Left ventricle myocardium inferior (tissue), 1 donor: ENCODE measurements at regions of chr13 and their contacts with region 1.

Region 1: DNA sequence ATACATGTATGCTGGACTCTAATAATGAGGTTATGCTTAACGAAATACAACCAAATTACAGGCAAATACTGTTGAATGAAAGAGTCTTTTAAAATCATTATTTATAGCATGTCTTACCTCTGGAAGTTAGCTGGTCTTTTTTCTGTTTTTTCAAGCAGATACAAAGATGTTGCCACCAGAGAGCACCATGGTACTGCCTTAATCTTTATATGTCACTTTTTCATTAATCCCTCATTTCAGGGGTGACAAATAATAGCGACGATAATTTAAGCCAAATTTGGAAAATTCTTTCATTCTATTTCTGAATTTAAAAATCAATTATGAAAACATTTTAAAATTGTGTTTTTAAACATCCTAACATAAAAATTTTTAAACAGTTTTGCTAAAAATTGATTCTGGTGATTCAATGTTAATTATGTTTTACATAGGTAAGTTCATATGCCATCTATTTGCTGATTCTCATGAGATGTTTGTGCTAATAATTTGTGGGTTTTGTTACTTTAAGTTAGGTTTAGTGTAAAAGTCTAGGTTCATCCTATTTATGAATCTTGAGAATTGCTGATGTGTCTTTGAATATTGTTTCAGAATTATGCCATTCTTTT is 379.3 kb upstream of the SGCG start:
- DNase-seq: no peak
- H3K4me3 ChIP-seq: no peak overlapping the region
- H3K27ac ChIP-seq: no peak overlapping the region
- H3K4me1 ChIP-seq: no peaks in the 10 kb centered on the region
- H3K27me3 ChIP-seq: peaks cover 5% of the 10 kb centered on the region
- CTCF ChIP-seq: peak; percentile 48

Region 2: DNA sequence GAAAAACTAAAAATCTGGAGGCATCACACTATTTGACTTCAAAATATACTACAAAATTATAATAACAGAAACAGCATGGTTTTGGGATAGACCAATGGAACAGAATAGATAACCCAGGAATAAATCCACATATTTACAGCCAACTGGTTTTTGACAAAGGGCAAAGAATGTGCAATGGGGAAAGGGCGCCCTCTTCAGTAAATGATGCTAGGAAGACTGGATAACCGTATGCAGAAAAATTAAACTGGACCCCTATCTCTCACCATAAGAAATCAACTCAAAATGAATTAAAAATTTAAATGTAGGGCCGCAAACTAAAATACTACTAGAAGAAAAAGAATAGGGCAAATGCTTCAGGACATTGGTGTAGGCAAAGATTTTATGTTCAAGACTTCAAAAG is 61.2 kb before region 1 on chr13:
- intact Hi-C with region 1: no loop called
- DNase-seq: no peak
- H3K4me3 ChIP-seq: no peak overlapping the region
- H3K27ac ChIP-seq: no peak overlapping the region
- H3K4me1 ChIP-seq: no peaks in the 10 kb centered on the region
- H3K27me3 ChIP-seq: peaks cover 7% of the 10 kb centered on the region
- CTCF ChIP-seq: peak; percentile 14

Region 3: DNA sequence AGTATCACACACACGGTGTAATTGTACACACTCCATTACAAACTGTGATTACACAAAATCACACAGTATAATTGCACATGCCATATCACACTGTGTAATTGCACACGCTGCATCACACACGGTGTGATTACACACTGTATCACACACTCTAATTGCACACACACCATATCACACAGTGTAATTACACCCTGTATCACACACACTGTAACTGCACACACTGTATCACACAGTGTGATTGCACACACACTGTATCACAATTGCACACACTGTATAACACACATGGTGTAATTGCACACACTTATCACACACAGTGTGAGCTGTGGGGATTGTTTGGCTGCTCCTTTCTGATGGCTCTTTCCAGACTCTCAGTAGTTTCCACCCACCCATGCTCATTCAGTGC is 216.6 kb after region 1 on chr13:
- intact Hi-C with region 1: loop called (anchors 5 kb)
- DNase-seq: no peak
- H3K4me3 ChIP-seq: no peak overlapping the region
- H3K27ac ChIP-seq: no peak overlapping the region
- H3K4me1 ChIP-seq: no peaks in the 10 kb centered on the region
- H3K27me3 ChIP-seq: peaks cover 7% of the 10 kb centered on the region
- CTCF ChIP-seq: no peak

Region 4: DNA sequence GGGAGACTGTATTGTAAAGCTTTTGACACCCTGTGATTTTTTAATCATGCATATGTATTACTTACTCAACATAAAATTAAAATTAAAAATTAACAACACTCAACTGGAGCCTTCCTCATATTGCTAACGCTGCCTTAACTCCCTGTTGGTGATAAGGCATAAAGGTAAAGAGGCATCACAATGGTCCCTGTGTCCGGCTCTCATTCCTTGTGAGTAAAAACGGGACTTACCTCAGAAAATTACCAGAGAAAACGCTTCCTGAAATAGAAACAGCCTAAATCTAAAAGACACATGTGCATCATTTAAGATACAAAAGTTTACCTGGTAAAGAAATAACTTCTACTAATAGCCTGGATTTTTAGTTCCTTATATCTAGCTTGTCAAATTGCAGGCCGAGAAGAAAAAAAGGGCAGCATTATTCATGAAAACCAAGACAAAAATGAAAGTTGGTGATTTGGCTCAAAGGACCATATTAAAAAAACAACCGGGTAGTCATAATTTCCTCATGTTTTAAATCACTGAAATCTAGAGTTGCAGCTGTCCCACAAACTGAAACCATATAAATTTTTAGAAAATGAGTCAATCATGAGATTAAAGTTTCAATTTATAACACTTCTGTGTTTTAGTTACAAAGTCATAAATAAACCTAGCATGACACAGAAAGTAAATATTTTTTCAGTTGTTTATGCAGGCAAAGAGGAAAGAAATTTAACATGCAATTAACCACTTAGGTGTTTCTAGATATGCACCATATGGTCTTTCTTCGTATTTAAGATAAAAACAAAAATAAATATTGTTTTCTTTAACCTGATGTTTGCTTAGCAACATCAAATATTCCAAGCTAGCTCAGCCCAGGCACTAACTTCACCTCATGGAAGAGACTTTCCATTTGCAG is 993.0 kb after region 1 on chr13:
- intact Hi-C with region 1: no loop called
- DNase-seq: no peak
- H3K4me3 ChIP-seq: peak overlapping the region; percentile 32
- H3K27ac ChIP-seq: peak overlapping the region; percentile 37
- H3K4me1 ChIP-seq: peaks cover 31% of the 10 kb centered on the region
- H3K27me3 ChIP-seq: no peaks in the 10 kb centered on the region
- CTCF ChIP-seq: no peak